Psoas muscle (tissue), 8 donors: ENCODE measurements at regions of chr12 and their contacts with region 1.

Region 1: GRCh38 chr12:47963340-47964040 is at the start of gene TMEM106C:
- DNase-seq: peak; percentile 91 to 96
- ATAC-seq: peak; percentile 96 to 99 (median 98)
- H3K4me3 ChIP-seq: peak within 1 kb of the TSS; percentile 94
- H3K27ac ChIP-seq: peak within 1 kb of the TSS; percentile 54
- H3K4me1 ChIP-seq: peaks cover 15% of the 10 kb centered on the region
- H3K27me3 ChIP-seq: no peaks in the 10 kb centered on the region
- CTCF ChIP-seq: peak; percentile 95
- total RNA-seq, gene TMEM106C: 7.7 to 15.8 (median 12.6) TPM

Region 2: GRCh38 chr12:47797441-47797840 is 166.0 kb before region 1 on chr12:
- intact Hi-C with region 1: no loop called
- DNase-seq: no peak
- ATAC-seq: peak; percentile 55 to 63 (median 60)
- H3K4me3 ChIP-seq: no peak overlapping the region
- H3K27ac ChIP-seq: no peak overlapping the region
- H3K4me1 ChIP-seq: peaks cover 53% of the 10 kb centered on the region
- H3K27me3 ChIP-seq: no peaks in the 10 kb centered on the region
- CTCF ChIP-seq: peak; percentile 62

Region 3: DNA sequence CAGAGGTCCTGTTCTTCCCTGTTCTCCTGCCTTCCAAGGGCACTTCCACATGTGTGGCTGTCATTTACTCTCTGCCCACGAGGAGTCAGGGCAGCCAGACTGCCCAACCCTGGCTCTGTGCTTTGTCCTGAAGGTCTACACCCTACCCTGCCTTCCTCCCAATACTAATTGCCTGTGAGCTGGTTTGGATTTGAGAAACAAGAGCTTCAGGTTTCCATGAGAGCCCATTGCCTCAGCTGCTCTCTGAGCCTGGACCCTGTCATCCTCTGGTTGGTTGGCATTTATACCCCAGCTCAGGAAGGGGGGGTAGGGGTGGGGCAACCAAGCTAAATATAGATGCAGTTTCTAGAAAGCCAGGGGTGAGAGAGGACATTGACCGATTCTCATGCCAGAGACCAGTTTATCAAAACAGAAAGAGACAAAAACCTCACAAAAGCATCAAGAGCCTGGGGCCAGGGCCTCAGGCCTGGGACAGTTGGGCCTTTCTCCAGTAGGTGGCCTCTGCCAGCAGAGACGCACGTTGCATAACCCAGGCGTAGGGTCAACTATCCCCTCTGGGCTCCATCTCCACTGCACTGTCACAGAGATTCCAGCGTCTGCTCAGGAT is 93.2 kb before region 1 on chr12:
- intact Hi-C with region 1: loop called in 1 of 2 experiments (anchors 5 kb)
- DNase-seq: peak; percentile 73 to 82
- ATAC-seq: peak; percentile 91 to 95 (median 92)
- H3K4me3 ChIP-seq: no peak overlapping the region
- H3K27ac ChIP-seq: peak overlapping the region; percentile 74
- H3K4me1 ChIP-seq: peaks cover 18% of the 10 kb centered on the region
- H3K27me3 ChIP-seq: no peaks in the 10 kb centered on the region
- CTCF ChIP-seq: peak; percentile 27

Region 4: DNA sequence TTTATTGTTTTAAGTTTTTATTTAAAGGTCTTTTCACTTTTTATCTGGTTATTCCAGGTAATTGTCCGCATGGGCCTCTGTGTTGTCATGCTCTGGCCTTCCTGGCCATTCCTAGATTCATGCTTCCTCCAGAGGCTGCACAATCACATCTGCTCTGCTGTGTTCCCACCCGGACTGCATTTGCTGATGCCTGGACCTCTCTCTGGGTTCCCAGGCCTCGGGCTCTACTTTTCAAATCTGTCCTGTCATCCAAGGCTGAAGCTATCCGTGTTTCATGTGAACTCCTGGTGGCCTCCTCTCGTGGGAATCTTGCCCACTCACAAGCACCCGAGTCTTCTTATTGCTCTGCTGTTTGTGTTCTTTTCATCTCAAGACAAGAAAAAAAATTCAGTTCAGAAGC is 42.6 kb before region 1 on chr12:
- intact Hi-C with region 1: no loop called
- DNase-seq: no peak
- ATAC-seq: no peak
- H3K4me3 ChIP-seq: no peak overlapping the region
- H3K27ac ChIP-seq: no peak overlapping the region
- H3K4me1 ChIP-seq: no peaks in the 10 kb centered on the region
- H3K27me3 ChIP-seq: no peaks in the 10 kb centered on the region
- CTCF ChIP-seq: no peak

Region 5: DNA sequence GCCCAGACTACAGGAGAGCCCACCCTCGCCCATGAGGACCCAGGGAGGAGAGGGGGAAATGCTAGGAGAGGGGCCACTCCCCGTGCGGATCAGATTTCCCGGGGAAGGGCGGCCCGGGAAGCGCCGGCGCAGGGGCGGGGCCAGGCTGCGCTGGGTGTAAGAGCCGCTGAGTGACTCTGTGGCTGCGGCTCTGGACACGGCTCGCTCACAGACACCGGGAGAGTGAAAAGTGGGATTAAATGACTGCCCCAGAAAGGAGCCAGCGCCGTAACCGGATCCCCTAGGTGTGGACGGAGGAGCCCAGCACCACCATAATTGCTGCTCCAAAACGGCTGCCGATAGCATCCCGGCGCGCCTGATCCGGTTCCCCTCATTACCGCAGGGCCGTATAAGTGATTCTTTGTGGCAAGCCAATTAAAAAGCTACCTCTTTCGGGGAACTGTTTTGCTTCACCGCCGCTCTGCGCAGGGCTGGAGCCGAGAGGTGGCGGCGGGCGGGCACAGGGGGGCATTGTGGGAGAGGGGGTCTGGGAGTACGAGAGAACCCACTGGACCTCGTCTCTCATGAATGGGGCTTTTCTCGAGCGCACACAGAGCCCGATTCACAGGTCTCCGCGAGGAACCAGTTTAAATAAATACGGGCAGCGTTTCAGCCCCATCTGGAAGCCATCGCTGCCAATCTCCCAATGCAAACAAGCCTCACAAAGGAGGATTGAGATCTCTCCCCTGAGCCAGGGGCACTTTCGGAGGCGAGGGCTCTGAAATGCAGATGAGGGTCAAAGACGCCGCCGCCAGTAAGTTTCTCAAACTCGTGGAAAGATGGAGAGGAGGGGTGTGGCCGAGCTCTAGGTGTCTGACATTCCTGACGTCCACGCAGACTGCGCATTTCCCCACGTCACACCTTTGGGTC is 38.3 kb after region 1 on chr12:
- intact Hi-C with region 1: loop called in 1 of 2 experiments (anchors 2 kb)
- DNase-seq: peak in 1 of 2 donors; percentile 55
- ATAC-seq: peak; percentile 71 to 80 (median 75)
- H3K4me3 ChIP-seq: peak overlapping the region; percentile 67
- H3K27ac ChIP-seq: no peak overlapping the region
- H3K4me1 ChIP-seq: peaks cover 40% of the 10 kb centered on the region
- H3K27me3 ChIP-seq: peaks cover 0 to 47% (median 19%) of the 10 kb centered on the region in 3 donors
- CTCF ChIP-seq: no peak

Region 6: GRCh38 chr12:48023399-48023785 is 59.9 kb after region 1 on chr12:
- intact Hi-C with region 1: no loop called
- DNase-seq: no peak
- ATAC-seq: peak; percentile 65 to 88 (median 76)
- H3K4me3 ChIP-seq: no peak overlapping the region
- H3K27ac ChIP-seq: no peak overlapping the region
- H3K4me1 ChIP-seq: peaks cover 9% of the 10 kb centered on the region
- H3K27me3 ChIP-seq: peaks cover 0 to 3% (median 0%) of the 10 kb centered on the region in 3 donors
- CTCF ChIP-seq: no peak

Region 7: DNA sequence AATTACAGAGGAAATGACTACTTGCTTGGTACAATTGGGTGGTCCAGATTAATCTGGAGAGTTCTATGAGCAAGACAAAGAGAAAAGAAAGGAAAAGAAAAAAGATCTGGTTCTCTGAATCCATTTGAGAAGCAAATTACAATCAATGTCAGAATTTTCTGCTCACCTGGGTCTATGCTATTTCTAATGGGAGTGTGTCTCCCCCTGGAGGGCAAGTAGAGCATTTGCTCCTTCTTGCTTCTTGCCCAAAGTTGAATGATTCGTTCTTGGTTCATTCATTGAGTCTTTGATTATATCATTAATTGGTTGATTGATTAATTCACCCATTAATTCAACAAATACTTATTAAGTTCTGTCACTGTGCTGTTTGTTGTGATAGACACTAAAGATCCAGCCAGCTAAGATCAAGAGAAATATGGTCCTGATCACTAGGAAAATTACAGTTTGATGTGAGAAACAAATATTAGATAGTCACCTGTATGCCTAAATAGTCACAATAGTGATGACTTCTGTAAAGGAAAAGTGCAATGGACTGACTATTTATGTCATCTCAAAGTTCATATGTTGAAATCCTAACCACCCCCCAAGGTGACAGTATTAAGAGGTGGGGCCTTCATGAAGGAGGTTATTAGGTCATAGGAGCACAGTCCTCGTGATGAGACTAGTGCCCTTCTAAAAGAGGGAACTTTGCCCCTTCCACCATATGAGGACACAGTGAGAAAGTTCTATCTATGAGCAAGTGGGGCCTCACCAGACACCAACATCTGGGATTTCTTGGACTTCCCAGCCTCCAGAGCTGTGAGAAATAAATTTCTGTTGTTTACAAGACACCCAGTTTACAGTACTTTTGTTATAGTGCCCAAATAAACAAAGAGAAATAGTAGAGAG is 201.8 kb after region 1 on chr12:
- intact Hi-C with region 1: loop called (anchors 5 to 10 kb)
- DNase-seq: no peak
- ATAC-seq: peak; percentile 55 to 66 (median 58)
- H3K4me3 ChIP-seq: peak overlapping the region; percentile 8
- H3K27ac ChIP-seq: peak overlapping the region; percentile 88
- H3K4me1 ChIP-seq: peaks cover 31% of the 10 kb centered on the region
- H3K27me3 ChIP-seq: no peaks in the 10 kb centered on the region
- CTCF ChIP-seq: peak; percentile 94

Region 8: DNA sequence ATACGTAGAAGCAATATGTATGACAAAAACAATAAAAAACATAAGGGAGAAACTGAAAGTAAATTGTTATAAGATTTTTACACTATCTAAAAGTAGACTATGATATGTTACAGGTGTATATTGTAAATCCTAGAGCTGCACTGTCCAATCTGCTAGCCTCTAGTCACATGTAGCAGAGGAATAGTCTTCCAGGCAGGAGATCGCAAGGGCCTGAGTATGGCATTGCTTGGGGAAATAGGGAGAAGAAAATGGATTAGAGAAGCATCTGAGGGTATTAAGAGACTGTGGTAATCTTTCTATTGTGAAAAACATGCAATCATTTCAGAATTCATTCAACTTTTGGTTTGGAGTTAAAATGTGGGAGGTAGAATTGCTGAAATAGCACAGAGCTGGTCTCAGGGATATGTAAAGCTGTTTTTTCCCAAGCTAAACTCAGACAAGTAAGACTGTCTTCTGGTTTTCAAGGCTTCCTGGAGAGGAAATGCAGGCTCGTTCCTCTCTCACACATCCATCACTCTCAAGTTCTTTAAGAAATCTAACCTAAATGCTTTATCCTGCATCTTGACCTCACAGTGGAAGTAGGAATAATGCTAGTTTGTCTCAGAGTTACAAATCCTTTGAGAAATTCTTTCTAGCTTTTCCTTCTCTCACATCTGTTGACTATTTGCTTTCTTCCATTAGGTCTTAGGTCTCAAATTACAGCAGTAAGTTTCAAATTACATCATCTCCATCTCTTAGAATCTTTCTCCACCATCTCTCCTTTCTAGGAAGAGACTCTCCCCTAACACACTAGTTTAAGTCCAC is 212.3 kb after region 1 on chr12:
- intact Hi-C with region 1: loop called in 1 of 2 experiments (anchors 10 kb)
- DNase-seq: no peak
- ATAC-seq: no peak
- H3K4me3 ChIP-seq: no peak overlapping the region
- H3K27ac ChIP-seq: no peak overlapping the region
- H3K4me1 ChIP-seq: no peaks in the 10 kb centered on the region
- H3K27me3 ChIP-seq: peaks cover 0 to 12% (median 3%) of the 10 kb centered on the region in 3 donors
- CTCF ChIP-seq: no peak